Naive thymus-derived CD4-positive, alpha-beta T cell (primary cell): ENCODE measurements at regions of chr2 and their contacts with region 1.

Region 1: DNA sequence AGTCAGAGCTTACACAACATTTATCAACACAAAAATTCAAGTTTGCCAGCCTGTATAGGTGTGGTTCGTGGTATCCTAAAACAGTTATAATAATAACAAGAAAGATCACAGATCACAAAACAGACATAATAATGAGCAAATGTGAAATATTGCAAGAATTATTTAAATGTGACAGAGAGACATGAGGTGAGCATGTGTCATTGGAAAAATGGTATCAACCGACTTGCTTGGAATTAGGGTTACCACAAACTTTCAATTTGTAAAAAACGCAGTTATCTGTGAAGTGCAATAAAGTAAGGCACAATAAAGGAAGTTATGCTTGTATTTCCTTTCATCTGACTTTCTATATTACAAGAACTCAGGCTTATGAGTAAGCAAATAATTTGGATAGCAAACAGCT is 116.8 kb downstream of the IKZF2 start:
- DNase-seq: no peak
- ATAC-seq: no peak
- H3K4me3 ChIP-seq: no peak overlapping the region
- H3K4me3 Mint-ChIP-seq: no peak overlapping the region
- H3K27ac ChIP-seq: no peak overlapping the region
- H3K27ac Mint-ChIP-seq: peak overlapping the region in 1 of 9 donors; percentile 4
- H3K4me1 ChIP-seq: peaks cover 0 to 4% of the 10 kb centered on the region in 2 donors
- H3K4me1 Mint-ChIP-seq: peaks cover 0 to 16% (median 6%) of the 10 kb centered on the region in 7 donors
- H3K27me3 ChIP-seq: no peaks in the 10 kb centered on the region
- H3K27me3 Mint-ChIP-seq: no peaks in the 10 kb centered on the region

Region 2: GRCh38 chr2:211248847-211249246 is 1785.7 kb before region 1 on chr2:
- CTCF ChIA-PET with region 1: no interaction called
- POLR2A ChIA-PET with region 1: no interaction called
- intact Hi-C with region 1: no loop called
- DNase-seq: no peak
- ATAC-seq: no peak
- H3K4me3 ChIP-seq: no peak overlapping the region
- H3K4me3 Mint-ChIP-seq: no peak overlapping the region
- H3K27ac ChIP-seq: no peak overlapping the region
- H3K27ac Mint-ChIP-seq: no peak overlapping the region
- H3K4me1 ChIP-seq: no peaks in the 10 kb centered on the region
- H3K4me1 Mint-ChIP-seq: no peaks in the 10 kb centered on the region
- H3K27me3 ChIP-seq: no peaks in the 10 kb centered on the region
- H3K27me3 Mint-ChIP-seq: no peaks in the 10 kb centered on the region

Region 3: DNA sequence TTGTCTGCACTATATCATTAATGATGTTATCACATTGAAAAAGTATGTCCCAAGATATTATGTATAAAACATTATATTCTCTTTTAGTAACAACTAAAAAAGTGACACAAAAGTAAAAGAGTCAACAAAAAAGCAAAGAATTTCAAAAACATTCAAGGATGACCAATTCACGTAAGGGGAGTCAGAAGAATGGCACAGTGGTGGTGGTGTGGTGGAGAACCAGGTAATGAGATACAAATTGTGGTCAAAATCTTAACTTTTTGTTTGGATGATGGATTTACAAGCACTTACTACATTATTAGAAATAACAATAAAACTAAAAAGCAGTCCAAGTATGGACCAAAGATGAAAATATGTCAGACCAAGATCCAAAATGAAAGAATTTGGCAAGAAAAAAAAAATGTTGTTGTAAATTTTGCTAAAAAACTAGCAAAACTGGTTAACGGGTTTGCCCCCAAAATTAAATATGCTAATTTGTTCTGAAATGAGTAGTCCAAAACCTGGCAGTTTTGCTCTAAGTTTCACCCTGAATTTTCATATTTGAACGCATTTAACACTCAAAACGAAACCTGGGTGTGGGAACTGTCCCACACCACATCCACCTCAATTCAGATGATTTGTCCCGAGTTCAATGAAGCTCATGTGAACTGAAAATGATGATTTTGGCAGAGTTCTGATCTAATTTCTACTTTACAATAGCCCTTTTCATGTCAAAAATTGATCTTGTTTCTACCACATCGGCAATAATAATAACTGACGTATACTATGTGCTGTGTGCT is 19.0 kb before region 1 on chr2:
- CTCF ChIA-PET with region 1: no interaction called
- POLR2A ChIA-PET with region 1: no interaction called
- intact Hi-C with region 1: loop called in 1 of 2 experiments (anchors 1 kb)
- DNase-seq: peak in 1 of 9 donors; percentile 46
- ATAC-seq: peak; percentile 18
- H3K4me3 ChIP-seq: no peak overlapping the region
- H3K4me3 Mint-ChIP-seq: peak overlapping the region in 2 of 10 donors; percentile 9 to 23
- H3K27ac ChIP-seq: no peak overlapping the region
- H3K27ac Mint-ChIP-seq: peak overlapping the region in 1 of 9 donors; percentile 55
- H3K4me1 ChIP-seq: peaks cover 0 to 13% of the 10 kb centered on the region in 2 donors
- H3K4me1 Mint-ChIP-seq: peaks cover 0 to 24% (median 0%) of the 10 kb centered on the region in 7 donors
- H3K27me3 ChIP-seq: no peaks in the 10 kb centered on the region
- H3K27me3 Mint-ChIP-seq: peaks cover 0 to 32% (median 0%) of the 10 kb centered on the region in 5 donors

Region 4: DNA sequence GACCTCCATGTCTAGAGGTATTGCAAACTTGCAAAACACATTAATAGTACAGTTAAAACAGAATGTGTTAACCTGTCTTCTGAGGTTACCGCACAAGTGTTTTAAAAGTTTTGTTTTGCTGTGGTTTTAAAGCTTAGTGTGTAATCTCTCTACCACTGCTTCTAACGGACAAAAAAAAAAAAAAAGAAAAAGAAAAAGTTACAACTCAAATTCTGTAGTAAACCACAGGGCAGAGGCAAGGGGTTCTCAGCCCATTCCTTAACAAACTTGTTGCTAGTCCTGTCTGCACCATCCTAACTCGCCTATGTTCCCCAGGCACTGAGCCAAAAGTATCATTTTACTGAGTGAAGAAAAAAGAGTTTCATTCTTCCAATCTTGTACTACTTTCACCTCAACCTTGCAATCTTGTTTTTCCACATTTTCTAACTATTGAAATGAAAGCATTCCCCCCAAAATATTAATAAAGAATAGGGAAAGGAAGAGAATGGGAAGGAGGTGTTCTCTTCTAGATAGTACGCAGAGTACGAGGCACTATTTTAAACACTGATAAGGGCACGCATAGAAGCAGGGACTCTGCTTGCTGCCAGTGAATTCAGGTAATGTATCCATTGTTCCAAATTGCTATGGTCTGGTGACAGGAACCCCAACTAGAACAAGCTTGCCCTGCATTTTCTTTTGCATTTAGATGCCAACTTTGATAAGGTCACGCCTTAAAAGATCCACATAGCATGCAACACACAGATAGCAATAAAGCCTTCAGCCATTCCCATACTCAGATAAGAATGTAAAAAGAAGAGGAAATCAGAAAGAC is 69.7 kb after region 1 on chr2:
- CTCF ChIA-PET with region 1: no interaction called
- POLR2A ChIA-PET with region 1: no interaction called
- intact Hi-C with region 1: loop called in 1 of 2 experiments (anchors 5 kb)
- DNase-seq: peak in 3 of 9 donors; percentile 21 to 27 (median 21)
- ATAC-seq: peak; percentile 61
- H3K4me3 ChIP-seq: no peak overlapping the region
- H3K4me3 Mint-ChIP-seq: peak overlapping the region in 9 of 10 donors; percentile 12 to 74 (median 63)
- H3K27ac ChIP-seq: peak overlapping the region; percentile 22
- H3K27ac Mint-ChIP-seq: peak overlapping the region in 7 of 9 donors; percentile 0 to 79 (median 56)
- H3K4me1 ChIP-seq: peaks cover 4 to 5% of the 10 kb centered on the region in 2 donors
- H3K4me1 Mint-ChIP-seq: peaks cover 0 to 44% (median 15%) of the 10 kb centered on the region in 7 donors
- H3K27me3 ChIP-seq: no peaks in the 10 kb centered on the region
- H3K27me3 Mint-ChIP-seq: peaks cover 0 to 5% (median 0%) of the 10 kb centered on the region in 5 donors